A673 (cell line): ENCODE measurements at regions of chr17 and their contacts with region 1.

Region 1: DNA sequence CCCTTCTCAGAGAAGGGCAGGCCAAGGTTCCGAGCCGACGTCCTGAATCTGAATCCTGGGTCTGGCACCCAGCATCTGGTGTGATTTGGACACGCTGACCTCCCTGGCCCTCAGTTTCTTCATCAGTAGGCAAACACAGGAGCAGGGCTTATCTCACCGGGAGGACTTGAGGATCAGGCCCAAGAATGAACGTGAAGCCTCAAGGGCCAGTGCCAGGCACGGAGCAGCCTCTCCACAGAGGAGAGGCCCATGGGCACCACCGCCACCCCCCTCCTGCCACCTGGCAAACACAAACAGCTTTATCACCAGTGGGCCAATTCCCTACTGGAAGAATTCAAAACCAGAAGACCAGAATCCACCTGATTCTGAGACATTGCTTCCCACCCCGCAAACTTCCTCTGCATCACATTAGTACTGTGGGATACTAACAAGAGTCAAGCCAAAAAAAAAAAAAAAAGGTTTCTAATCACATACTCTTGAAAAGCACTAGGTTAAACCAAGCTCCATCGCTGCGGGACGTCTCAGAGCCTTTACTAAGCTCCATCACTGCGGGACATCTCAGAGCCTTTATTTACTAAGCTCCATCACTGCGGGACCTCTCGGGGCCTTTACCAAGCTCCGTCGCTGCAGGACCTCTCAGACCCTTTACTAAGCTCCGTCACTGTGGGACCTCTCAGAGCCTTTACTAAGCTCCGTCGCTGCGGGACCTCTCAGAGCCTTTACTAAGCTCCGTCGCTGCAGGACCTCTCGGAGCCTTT is 68.0 kb upstream of the DOC2B start:
- DNase-seq: no peak
- H3K4me3 ChIP-seq: no peak overlapping the region
- H3K27ac ChIP-seq: no peak overlapping the region
- H3K4me1 ChIP-seq: no peaks in the 10 kb centered on the region
- H3K27me3 ChIP-seq: no peaks in the 10 kb centered on the region
- CTCF ChIP-seq: no peak

Region 2: DNA sequence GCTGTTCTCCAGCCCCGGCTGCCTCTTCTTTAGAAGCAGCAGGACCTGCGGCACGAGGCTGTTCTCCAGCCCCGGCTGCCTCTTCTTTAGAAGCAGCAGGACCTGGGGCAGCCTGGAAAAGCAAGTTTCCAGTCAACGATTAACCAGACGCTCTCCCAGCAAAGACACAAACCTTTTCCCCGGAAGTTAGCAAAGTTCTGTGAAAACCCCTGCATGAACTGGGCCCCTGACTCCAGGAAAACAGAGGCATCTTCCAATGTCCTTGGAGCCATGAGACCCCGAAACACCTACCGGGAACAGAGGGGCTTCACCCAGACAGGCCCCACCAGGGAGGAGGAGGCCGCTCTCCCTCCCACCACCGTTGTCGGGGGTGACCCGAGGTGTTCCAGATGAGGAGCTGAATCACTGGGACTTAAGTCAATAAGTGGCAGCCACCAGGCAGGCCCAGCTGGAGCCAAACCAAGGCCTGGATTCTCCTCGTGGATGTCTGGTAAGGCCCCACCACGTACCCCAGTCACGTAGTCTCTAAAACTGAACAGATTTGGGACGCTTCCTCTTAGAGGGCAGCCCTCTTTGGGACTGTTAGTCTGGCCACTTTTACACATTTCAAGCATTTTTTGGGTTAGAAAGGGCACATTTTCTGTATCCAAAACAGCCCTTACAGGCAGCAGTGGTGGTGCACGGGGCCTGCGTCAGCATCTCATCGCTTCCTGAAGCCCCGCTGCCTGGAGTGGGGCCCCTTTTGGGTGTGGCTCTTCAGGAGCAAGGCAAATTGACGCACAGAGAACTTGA is 103.2 kb after region 1 on chr17 and contains the start of gene RPH3AL:
- CTCF ChIA-PET with region 1: no interaction called
- POLR2A ChIA-PET with region 1: interaction called, 13 read pairs
- intact Hi-C with region 1: no loop called
- DNase-seq: no peak
- H3K4me3 ChIP-seq: no peak within 1 kb of the TSS
- H3K27ac ChIP-seq: peak within 1 kb of the TSS; percentile 42
- H3K4me1 ChIP-seq: no peaks in the 10 kb centered on the region
- H3K27me3 ChIP-seq: no peaks in the 10 kb centered on the region
- CTCF ChIP-seq: no peak
- total RNA-seq, gene RPH3AL: 0.82 and 1.3 TPM in 2 replicates